ENCODE measurements at regions of chr2 and their contacts with region 1.

Region 1: GRCh38 chr2:27086090-27086723 is 365 bp upstream of the KHK start:
- DNase-seq: peak; percentile 96
- H3K4me3 Mint-ChIP-seq: peak overlapping the region; percentile 81
- H3K27ac Mint-ChIP-seq: peak overlapping the region; percentile 63
- H3K4me1 Mint-ChIP-seq: peaks cover 30% of the 10 kb centered on the region
- H3K27me3 Mint-ChIP-seq: no peaks in the 10 kb centered on the region

Region 2: DNA sequence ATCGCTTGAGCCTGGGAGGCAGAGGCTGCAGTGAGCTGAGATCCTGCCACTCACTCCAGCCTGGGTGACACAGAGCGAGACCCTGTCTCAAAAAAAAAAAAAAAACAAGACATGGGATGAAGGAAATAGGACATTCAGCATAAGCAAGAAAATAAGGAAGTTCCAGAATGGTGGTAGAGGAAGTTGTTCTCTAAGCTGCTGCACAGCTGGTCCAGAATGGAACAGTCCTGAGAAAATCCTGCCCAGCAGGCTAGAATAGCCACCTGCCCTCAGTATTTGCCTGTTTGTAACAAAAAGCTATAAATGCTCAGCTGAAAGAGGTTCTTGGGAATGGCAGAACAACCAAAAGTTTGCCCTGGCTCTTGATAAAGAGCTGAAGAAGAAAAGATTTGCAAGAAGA is 126.9 kb before region 1 on chr2:
- CTCF ChIA-PET with region 1: interaction called, 5 read pairs
- intact Hi-C with region 1: loop called (anchors 1 kb)
- DNase-seq: no peak
- H3K4me3 Mint-ChIP-seq: no peak overlapping the region
- H3K27ac Mint-ChIP-seq: no peak overlapping the region
- H3K4me1 Mint-ChIP-seq: no peaks in the 10 kb centered on the region
- H3K27me3 Mint-ChIP-seq: peaks cover 12% of the 10 kb centered on the region

Region 3: DNA sequence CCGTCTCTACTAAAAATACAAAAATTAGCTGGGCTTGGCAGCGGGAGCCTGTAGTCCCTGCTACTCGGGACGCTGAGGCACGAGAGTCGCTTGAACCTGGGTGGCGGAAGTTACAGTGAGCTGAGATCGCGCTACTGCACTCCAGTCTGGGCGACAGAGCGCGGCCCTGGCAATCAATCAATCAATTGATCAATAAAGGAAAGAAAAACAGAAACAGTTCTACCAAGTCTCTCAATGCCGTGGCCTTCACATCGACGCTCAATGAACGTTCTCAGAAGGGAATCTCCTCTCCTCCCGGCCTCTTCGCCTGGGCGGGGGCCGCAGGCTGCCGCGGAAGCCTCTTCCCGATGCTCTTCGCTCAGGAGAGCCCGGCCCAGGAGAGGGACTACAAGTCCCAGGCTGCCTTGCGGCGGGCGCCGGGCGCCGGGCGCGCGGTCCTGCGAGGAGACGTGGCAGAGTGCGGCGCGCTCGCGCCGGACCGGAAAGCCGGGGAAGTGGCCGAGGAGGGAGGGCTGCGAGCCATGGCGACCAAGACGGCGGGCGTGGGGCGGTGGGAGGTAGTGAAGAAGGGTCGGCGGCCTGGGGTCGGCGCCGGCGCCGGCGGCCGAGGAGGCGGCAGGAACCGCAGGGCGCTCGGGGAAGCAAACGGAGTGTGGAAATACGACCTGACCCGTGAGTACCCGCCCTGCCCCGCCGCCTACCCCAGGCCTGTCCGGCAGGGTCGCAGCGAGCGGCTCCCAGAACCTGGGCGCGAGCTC is 53.5 kb before region 1 on chr2 and contains the start of gene TMEM214:
- CTCF ChIA-PET with region 1: interaction called, 6 read pairs
- intact Hi-C with region 1: loop called (anchors 1 kb)
- DNase-seq: peak; percentile 83
- H3K4me3 Mint-ChIP-seq: peak within 1 kb of the TSS; percentile 94
- H3K27ac Mint-ChIP-seq: peak within 1 kb of the TSS; percentile 77
- H3K4me1 Mint-ChIP-seq: peaks cover 35% of the 10 kb centered on the region
- H3K27me3 Mint-ChIP-seq: no peaks in the 10 kb centered on the region
- total RNA-seq, gene TMEM214: 38.3 to 41.3 TPM

Region 4: GRCh38 chr2:27071277-27071989 is 14.8 kb before region 1 on chr2 and contains the start of gene OST4:
- CTCF ChIA-PET with region 1: interaction called, 13 read pairs
- intact Hi-C with region 1: loop called (anchors 1 kb)
- DNase-seq: peak; percentile 88
- H3K4me3 Mint-ChIP-seq: peak within 1 kb of the TSS; percentile 97
- H3K27ac Mint-ChIP-seq: peak within 1 kb of the TSS; percentile 91
- H3K4me1 Mint-ChIP-seq: peaks cover 76% of the 10 kb centered on the region
- H3K27me3 Mint-ChIP-seq: no peaks in the 10 kb centered on the region
- total RNA-seq, gene OST4: 257 to 282 TPM

Region 5: DNA sequence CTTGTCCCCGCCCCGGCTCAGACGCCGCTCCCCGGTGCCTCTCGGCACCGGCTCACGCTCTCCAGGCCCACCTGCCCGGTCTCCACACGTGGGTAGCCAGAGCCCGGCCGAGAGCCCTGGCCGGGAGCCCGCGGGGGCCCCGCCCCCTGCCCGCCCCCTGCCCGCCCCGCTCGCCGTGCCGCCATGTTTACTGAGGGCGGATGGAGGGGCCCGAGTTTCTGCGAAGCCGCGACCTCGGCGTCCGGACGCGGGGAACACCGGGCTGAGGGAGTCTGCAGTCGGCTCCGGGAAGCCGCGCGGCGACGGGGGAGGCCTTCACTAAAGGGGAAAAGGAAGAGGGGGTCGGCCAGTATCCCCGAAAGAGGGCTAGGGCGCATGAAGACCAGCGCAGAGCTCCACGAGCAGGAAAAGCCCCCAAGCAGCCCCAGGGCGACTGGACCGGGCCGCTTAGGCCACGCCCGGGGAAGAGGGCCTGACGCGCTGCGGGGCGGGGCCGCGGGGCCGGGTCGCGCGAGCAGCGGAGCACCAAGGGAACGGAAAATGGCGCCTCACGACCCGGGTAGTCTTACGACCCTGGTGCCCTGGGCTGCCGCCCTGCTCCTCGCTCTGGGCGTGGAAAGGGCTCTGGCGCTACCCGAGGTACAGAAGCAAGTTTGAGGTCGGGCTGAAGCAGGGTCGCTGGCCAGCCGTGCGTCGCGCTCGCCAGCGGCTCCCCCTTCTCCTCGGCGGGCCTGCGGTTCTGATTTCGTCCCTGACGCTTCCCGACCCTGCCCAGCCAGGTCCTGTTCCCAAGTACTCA is 125.8 kb after region 1 on chr2 and contains the starts of genes ATRAID and SLC5A6:
- CTCF ChIA-PET with region 1: no interaction called
- intact Hi-C with region 1: loop called (anchors 1 kb)
- DNase-seq: peak; percentile 88
- H3K4me3 Mint-ChIP-seq: peak within 1 kb of the TSS; percentile 98
- H3K27ac Mint-ChIP-seq: peak within 1 kb of the TSS; percentile 99
- H3K4me1 Mint-ChIP-seq: peaks cover 29% of the 10 kb centered on the region
- H3K27me3 Mint-ChIP-seq: no peaks in the 10 kb centered on the region
- total RNA-seq, gene ATRAID: 80.5 to 80.8 TPM
- total RNA-seq, gene SLC5A6: 22.6 to 24.8 TPM

Region 6: DNA sequence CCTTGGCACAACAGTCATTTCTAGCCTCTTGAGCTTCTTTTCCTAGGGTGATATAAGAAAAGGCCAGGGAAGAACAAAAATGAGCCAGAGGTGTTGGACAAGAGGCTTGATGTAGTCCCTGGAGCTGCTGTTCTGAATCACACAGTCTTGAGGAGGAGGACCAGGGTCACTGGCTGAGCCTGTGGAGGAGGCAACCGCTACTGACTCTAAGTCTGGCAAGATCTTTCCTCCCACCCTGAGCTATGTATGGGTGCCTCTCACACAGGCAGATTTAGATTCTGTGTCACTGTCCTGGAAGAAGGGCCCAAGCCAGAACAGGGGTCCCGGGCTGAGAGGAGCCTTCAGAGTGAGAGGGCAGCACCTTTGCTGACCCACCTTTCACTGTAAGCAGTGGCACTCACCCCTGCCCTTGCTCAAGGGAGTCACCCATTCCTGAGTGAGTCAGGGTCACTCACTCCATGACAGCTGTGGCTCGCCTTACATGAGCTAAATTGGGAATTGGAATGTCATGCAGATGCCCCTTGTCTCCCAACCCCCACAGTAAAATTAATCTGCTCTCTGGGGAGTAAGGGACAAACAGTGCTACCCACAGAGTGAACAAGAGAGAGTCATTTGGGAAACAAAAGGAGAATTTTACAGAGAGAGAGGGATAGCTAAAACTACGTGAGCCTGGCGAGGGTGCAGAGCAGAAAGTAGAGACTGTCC is 195.8 kb after region 1 on chr2 and contains the start of gene TRIM54:
- CTCF ChIA-PET with region 1: interaction called, 5 read pairs
- intact Hi-C with region 1: loop called (anchors 1 kb)
- DNase-seq: no peak
- H3K4me3 Mint-ChIP-seq: no peak within 1 kb of the TSS
- H3K27ac Mint-ChIP-seq: no peak within 1 kb of the TSS
- H3K4me1 Mint-ChIP-seq: peaks cover 2% of the 10 kb centered on the region
- H3K27me3 Mint-ChIP-seq: peaks cover 2% of the 10 kb centered on the region
- total RNA-seq, gene TRIM54: not detected